ENCODE measurements at regions of chr2 and their contacts with region 1.

Region 1: GRCh38 chr2:177263451-177264208 is 897 bp downstream of the NFE2L2 start:
- DNase-seq: peak; percentile 98
- ATAC-seq: peak; percentile 56 to 84 (median 61)
- H3K4me3 ChIP-seq: peak overlapping the region; percentile 97
- H3K4me3 Mint-ChIP-seq: peak overlapping the region; percentile 97
- H3K27ac ChIP-seq: peak overlapping the region; percentile 100
- H3K27ac Mint-ChIP-seq: peak overlapping the region; percentile 97 to 99
- H3K4me1 ChIP-seq: peaks cover 18% of the 10 kb centered on the region
- H3K4me1 Mint-ChIP-seq: peaks cover 47 to 60% of the 10 kb centered on the region in 2 donors
- H3K27me3 ChIP-seq: no peaks in the 10 kb centered on the region
- H3K27me3 Mint-ChIP-seq: no peaks in the 10 kb centered on the region
- CTCF ChIP-seq: peak; percentile 79

Region 2: DNA sequence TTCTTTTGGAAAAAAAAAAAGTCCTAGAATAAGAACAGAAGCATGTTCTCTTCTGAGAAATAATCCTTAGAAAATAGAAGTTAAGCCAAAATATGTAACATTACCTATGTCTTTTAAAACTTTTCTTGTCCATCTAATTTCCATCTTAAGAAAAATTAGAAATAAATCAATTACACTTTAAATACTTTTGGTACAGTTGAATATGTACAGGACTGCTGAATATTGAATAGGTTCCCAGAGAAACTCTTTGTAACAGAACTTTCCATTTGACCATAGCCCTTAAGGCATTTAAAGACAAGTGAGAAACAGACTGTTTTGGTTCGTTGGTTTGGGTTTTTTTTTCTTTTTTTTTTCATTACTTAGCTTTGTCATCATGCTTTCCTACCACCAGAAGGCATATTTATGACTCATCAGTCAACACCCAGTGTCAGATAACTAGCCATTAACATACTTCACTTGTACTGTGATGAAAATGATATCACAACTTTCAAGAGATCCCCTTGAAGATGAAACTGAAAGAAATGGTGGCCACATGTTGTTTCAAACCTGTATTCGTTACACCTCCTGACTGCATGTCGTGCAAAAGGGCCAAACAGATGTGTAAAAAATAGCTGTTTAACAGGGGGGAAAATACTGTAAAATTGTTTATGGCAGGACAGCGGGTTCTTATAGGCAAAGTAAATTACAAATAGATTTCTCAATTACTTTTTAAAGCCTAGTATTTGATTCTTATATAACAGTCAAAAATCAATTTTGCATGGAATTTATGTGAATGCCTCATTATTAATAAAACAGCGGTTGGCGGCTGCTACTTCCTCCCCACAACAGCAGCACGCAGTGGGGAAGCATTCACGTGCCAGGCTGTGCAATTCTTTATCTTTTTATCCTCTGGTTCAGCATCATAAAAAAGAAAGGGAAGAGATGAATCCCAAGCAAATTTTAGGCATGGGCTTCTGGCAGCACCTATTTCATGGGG is 331.8 kb before region 1 on chr2:
- intact Hi-C with region 1: loop called (anchors 10 kb)
- DNase-seq: peak; percentile 30 to 75
- ATAC-seq: peak; percentile 93 to 97 (median 97)
- H3K4me3 ChIP-seq: no peak overlapping the region
- H3K4me3 Mint-ChIP-seq: peak overlapping the region; percentile 75
- H3K27ac ChIP-seq: peak overlapping the region; percentile 58
- H3K27ac Mint-ChIP-seq: peak overlapping the region; percentile 87 to 91
- H3K4me1 ChIP-seq: peaks cover 4% of the 10 kb centered on the region
- H3K4me1 Mint-ChIP-seq: peaks cover 14 to 16% of the 10 kb centered on the region in 2 donors
- H3K27me3 ChIP-seq: no peaks in the 10 kb centered on the region
- H3K27me3 Mint-ChIP-seq: no peaks in the 10 kb centered on the region
- CTCF ChIP-seq: no peak

Region 3: GRCh38 chr2:177155631-177156030 is 108.0 kb before region 1 on chr2:
- intact Hi-C with region 1: no loop called
- DNase-seq: no peak
- ATAC-seq: no peak
- H3K4me3 ChIP-seq: no peak overlapping the region
- H3K4me3 Mint-ChIP-seq: no peak overlapping the region
- H3K27ac ChIP-seq: no peak overlapping the region
- H3K27ac Mint-ChIP-seq: no peak overlapping the region
- H3K4me1 ChIP-seq: no peaks in the 10 kb centered on the region
- H3K4me1 Mint-ChIP-seq: no peaks in the 10 kb centered on the region
- H3K27me3 ChIP-seq: no peaks in the 10 kb centered on the region
- H3K27me3 Mint-ChIP-seq: peaks cover 10 to 13% of the 10 kb centered on the region in 2 donors
- CTCF ChIP-seq: no peak

Region 4: GRCh38 chr2:177212106-177212890 is 51.3 kb before region 1 on chr2 and contains the start of gene HNRNPA3:
- intact Hi-C with region 1: loop called (anchors 1 kb)
- DNase-seq: peak; percentile 100
- ATAC-seq: peak; percentile 84 to 95 (median 84)
- H3K4me3 ChIP-seq: peak within 1 kb of the TSS; percentile 70
- H3K4me3 Mint-ChIP-seq: peak within 1 kb of the TSS; percentile 94
- H3K27ac ChIP-seq: peak within 1 kb of the TSS; percentile 100
- H3K27ac Mint-ChIP-seq: peak within 1 kb of the TSS; percentile 99 to 100
- H3K4me1 ChIP-seq: peaks cover 18% of the 10 kb centered on the region
- H3K4me1 Mint-ChIP-seq: peaks cover 47 to 51% of the 10 kb centered on the region in 2 donors
- H3K27me3 ChIP-seq: no peaks in the 10 kb centered on the region
- H3K27me3 Mint-ChIP-seq: no peaks in the 10 kb centered on the region
- CTCF ChIP-seq: no peak
- total RNA-seq, gene HNRNPA3: 223 to 298 (median 289) TPM

Region 5: GRCh38 chr2:177239932-177240630 is 23.5 kb before region 1 on chr2:
- intact Hi-C with region 1: loop called (anchors 2 kb)
- DNase-seq: peak; percentile 52 to 73
- ATAC-seq: peak; percentile 90 to 97 (median 90)
- H3K4me3 ChIP-seq: no peak overlapping the region
- H3K4me3 Mint-ChIP-seq: peak overlapping the region; percentile 80
- H3K27ac ChIP-seq: peak overlapping the region; percentile 86
- H3K27ac Mint-ChIP-seq: peak overlapping the region; percentile 91 to 93
- H3K4me1 ChIP-seq: peaks cover 42% of the 10 kb centered on the region
- H3K4me1 Mint-ChIP-seq: peaks cover 78% of the 10 kb centered on the region in 2 donors
- H3K27me3 ChIP-seq: no peaks in the 10 kb centered on the region
- H3K27me3 Mint-ChIP-seq: no peaks in the 10 kb centered on the region
- CTCF ChIP-seq: no peak

Region 6: GRCh38 chr2:177252808-177253531 is 10.7 kb before region 1 on chr2:
- intact Hi-C with region 1: loop called (anchors 1 kb)
- DNase-seq: no peak
- ATAC-seq: no peak
- H3K4me3 ChIP-seq: no peak overlapping the region
- H3K4me3 Mint-ChIP-seq: peak overlapping the region; percentile 85
- H3K27ac ChIP-seq: peak overlapping the region; percentile 94
- H3K27ac Mint-ChIP-seq: peak overlapping the region; percentile 99 to 100
- H3K4me1 ChIP-seq: peaks cover 63% of the 10 kb centered on the region
- H3K4me1 Mint-ChIP-seq: peaks cover 80 to 88% of the 10 kb centered on the region in 2 donors
- H3K27me3 ChIP-seq: no peaks in the 10 kb centered on the region
- H3K27me3 Mint-ChIP-seq: no peaks in the 10 kb centered on the region
- CTCF ChIP-seq: no peak

Region 7: GRCh38 chr2:177296040-177296439 is 32.4 kb after region 1 on chr2:
- intact Hi-C with region 1: loop called (anchors 5 kb)
- DNase-seq: peak in 1 of 2 donors; percentile 67
- ATAC-seq: peak in 2 of 3 donors; percentile 54 to 67
- H3K4me3 ChIP-seq: no peak overlapping the region
- H3K4me3 Mint-ChIP-seq: no peak overlapping the region
- H3K27ac ChIP-seq: no peak overlapping the region
- H3K27ac Mint-ChIP-seq: peak overlapping the region in 1 of 2 donors; percentile 20
- H3K4me1 ChIP-seq: no peaks in the 10 kb centered on the region
- H3K4me1 Mint-ChIP-seq: no peaks in the 10 kb centered on the region
- H3K27me3 ChIP-seq: no peaks in the 10 kb centered on the region
- H3K27me3 Mint-ChIP-seq: no peaks in the 10 kb centered on the region
- CTCF ChIP-seq: peak; percentile 59

Region 8: DNA sequence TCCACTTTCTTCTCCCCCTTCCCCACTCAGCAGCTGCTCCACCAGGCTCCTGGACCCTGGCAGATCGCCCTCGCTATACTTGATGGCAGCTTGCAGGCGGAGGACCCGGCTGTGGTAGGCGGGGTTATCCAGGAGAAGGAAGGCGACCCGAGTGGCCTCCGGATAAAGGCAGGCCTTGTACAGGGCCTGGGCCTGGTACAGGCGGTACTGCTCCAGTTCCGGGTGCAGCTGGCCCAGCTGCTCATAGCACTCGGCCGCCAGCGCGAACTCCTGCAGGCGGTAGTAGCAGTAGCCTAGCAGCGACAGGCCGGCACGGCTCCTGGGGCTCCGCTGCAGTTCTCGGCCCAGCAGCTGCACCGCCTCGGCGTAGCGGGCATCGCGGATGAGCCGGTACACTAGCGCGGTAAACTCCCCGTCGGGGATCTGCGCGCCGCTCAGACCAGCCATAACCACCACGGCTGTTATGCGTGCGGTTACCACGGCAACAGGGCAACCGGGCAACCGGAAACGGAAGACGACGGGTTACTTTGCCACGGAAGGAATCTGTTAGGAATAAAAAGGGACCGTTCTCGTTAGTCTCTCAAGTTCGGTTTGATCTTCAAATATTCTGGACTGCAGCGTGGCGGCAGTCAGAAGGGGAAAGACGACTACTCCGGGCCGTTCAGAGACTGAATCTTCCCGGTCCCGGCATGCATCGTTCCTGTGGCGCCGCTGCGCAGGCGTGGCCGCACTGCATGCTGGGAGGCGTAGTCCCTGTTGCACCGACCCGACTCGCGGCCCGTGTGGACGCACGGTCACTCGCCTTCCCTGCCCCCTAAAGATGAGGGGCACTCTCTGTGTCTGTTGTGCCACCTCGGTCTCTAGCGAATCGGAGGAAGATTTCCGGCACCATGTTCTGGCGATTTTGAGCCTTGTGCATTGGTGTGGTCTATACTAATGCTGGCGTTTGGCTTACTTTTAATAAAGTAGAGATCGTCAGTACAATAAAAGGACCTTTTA is 354.9 kb after region 1 on chr2:
- intact Hi-C with region 1: loop called (anchors 10 kb)
- DNase-seq: peak; percentile 91 to 96
- ATAC-seq: peak; percentile 90 to 94 (median 92)
- H3K4me3 ChIP-seq: peak overlapping the region; percentile 95
- H3K4me3 Mint-ChIP-seq: peak overlapping the region; percentile 95
- H3K27ac ChIP-seq: peak overlapping the region; percentile 99
- H3K27ac Mint-ChIP-seq: peak overlapping the region; percentile 98 to 99
- H3K4me1 ChIP-seq: peaks cover 11% of the 10 kb centered on the region
- H3K4me1 Mint-ChIP-seq: peaks cover 12% of the 10 kb centered on the region in 2 donors
- H3K27me3 ChIP-seq: peaks cover 6% of the 10 kb centered on the region
- H3K27me3 Mint-ChIP-seq: peaks cover 14 to 15% of the 10 kb centered on the region in 2 donors
- CTCF ChIP-seq: no peak

Measured in natural killer cell (primary cell).